Dorsolateral prefrontal cortex (tissue), 120 donors: ENCODE measurements at regions of chr17 and their contacts with region 1.

Region 1: GRCh38 chr17:5111402-5112204 is at the start of gene ZNF232:
- DNase-seq: peak; percentile 79 to 95 (median 90)
- H3K4me3 ChIP-seq: peak within 1 kb of the TSS; percentile 52 to 99 (median 93)
- H3K27ac ChIP-seq: peak within 1 kb of the TSS in 57 of 59 donors; percentile 2 to 92 (median 80)
- H3K27me3 ChIP-seq: peaks cover 0 to 26% (median 13%) of the 10 kb centered on the region in 45 donors
- CTCF ChIP-seq: peak in 48 of 56 donors; percentile 17 to 68 (median 44)
- total RNA-seq, gene ZNF232: 7.6 to 20.3 (median 10.9) TPM

Region 2: DNA sequence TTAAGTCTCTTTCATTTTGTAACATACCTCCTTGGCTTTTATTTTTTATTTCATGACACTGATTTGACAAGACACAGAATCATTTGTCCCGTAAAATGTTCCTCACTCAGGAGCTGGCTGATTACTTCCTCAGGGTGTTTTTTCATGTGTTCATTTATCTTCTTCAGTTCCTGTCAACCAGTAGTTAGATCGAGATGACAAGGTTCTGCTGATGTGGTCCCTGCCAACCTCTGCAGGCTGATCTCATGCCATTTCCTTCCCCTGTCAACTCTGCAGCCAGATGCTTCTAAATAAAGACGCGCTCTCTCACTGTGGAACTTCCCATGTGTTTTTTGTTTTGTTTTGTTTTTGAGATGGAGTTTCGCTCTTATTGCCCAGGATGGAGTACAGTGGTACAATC is 363.8 kb before region 1 on chr17:
- intact Hi-C with region 1: no loop called
- DNase-seq: no peak
- H3K4me3 ChIP-seq: no peak overlapping the region
- H3K27ac ChIP-seq: peak overlapping the region in 26 of 59 donors; percentile 5 to 67 (median 42)
- H3K27me3 ChIP-seq: peaks cover 0 to 31% (median 14%) of the 10 kb centered on the region in 45 donors
- CTCF ChIP-seq: no peak

Region 3: DNA sequence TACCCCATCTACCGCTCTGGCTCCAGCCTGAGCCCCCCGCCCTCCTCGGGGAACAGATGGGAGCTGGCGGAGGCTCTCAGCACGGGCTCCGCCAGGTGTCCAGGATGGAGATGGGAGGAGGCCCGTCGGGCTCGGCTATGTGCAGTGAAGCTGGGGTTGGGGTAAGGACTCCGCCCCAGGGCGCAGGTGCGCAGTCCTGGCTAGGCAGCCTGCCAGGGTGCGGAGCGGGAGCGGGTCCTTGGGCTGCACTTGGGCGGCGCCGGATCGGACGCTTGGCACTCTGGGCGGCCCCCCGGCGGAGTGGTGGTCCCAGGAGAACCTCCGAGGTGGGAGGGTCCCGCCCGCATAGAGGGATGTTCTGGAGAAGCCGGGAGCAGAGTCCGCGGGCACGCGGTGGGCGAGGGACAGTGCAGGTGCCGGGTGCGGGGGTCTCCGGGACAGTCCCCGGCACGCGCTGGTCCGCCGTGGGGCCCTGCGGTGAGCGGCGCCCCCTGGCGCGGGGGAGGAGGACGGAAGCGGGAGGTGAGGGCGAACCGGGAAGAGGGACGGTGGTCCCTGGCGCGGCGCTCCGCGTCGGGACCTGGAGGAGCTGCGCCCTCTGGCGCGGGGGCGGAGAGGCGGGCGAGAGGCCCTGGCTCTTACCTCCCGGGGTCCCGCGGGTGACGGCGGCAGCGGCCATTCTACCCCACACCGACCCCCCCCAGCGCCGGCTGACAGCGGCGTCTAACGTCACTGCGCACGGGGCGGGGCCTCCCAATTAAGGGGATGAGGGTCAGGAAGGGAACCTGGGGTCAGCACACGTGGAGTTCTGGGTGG is 124.4 kb before region 1 on chr17 and contains the start of gene CAMTA2:
- intact Hi-C with region 1: loop called in 1 of 2 experiments (anchors 5 kb)
- DNase-seq: peak; percentile 77 to 93 (median 90)
- H3K4me3 ChIP-seq: peak within 1 kb of the TSS; percentile 64 to 100 (median 96)
- H3K27ac ChIP-seq: peak within 1 kb of the TSS; percentile 68 to 98 (median 93)
- H3K27me3 ChIP-seq: no peaks in the 10 kb centered on the region
- CTCF ChIP-seq: peak in 55 of 56 donors; percentile 41 to 82 (median 68)
- total RNA-seq, gene CAMTA2: 79.4 to 186 (median 143) TPM

Region 4: DNA sequence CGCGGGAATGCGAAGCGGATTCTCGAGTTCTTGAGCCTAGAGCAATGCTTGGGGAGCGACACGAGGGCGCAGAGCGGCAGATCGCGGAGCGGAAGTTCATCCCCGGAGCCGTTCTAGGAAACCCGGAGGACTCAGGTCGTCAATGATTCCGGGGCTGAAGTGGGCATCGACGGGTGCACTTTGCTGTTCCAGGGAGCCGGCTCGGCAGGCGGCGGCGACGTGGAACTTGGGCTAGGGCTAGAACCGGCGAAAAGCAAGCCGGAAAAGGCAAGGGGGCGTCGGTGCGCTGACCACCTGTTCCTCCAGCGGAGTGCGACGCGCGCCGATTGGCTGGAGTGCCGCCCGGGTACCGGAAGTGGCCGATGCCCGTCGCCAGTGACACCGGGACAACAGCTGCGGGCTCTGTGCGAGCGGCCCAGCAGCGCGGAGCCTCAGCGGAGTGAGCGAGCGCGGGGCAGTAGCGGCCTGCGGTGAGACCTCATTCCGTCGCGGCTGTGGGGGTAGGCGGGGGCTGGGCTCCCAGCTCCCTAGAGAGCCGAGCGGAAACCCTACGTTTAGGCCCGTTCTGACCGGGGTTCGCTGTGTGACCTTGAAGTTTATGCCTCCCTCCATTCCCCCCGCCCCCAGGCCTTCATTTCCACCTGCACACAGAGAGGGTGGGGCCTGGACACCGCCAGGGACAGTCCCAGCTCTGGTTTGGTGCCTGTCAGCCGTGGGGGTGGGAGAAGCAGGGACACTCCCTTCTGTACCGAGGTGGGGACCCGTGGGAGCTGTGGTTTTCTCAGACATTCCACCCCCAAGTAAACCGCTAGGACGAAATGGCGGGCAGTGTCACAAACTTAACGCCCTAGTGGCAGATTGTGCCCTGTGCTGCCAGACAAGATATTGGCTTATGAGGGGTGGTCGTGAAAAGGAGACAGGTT is 33.2 kb before region 1 on chr17 and contains the start of gene ZFP3:
- intact Hi-C with region 1: loop called in 1 of 2 experiments (anchors 2 kb)
- DNase-seq: peak; percentile 76 to 91 (median 86)
- H3K4me3 ChIP-seq: peak within 1 kb of the TSS; percentile 49 to 98 (median 86)
- H3K27ac ChIP-seq: peak within 1 kb of the TSS in 57 of 59 donors; percentile 1 to 93 (median 78)
- H3K27me3 ChIP-seq: peaks cover 0 to 3% (median 0%) of the 10 kb centered on the region in 45 donors
- CTCF ChIP-seq: peak in 39 of 56 donors; percentile 5 to 64 (median 36)
- total RNA-seq, gene ZFP3: 4.7 to 13.7 (median 9.1) TPM

Region 5: DNA sequence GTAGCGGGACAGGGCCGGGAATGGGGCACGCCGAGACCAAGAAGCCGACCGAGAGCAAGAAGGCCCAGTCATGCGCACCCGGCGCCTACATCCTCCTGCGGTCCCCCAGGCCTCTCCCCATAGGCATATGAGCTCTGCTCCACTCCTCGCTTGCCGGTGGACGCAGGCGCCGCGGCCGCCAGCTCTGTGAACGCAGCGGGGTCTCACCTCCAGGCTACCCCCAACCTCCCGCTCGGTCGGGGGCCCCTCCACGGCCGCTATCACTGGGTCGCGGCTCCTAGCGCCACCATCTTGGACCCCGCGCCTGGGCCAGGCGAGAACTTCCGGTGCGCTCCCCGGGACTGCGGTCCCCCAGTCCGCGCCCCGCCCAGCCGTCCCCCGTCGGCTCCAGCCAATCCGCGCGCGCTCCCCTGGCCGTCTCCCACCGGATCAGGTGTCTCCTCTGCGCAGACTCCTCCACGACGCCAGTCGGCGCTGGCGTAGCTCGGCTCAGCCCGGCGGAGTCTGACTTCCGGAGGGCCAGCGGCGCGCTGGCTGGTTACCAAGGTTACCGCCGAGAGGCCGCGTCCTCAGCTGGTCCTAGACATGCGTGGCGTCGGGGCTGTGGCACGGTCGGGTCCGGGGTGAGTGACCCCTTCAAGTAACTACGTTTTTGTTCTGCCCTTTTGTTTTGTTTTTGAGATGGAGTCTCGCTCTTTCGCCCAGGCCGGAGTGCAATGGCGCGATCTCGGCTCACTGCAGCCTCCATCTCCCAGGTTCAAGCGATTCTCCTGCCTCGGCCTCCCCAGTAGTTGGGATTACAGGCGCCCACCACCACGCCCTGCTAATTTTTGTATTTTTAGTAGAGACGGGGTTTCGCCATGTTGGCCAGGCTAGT is 80.2 kb after region 1 on chr17 and contains the start of gene ZNF594:
- intact Hi-C with region 1: loop called (anchors 5 kb)
- DNase-seq: peak; percentile 88 to 97 (median 96)
- H3K4me3 ChIP-seq: peak within 1 kb of the TSS; percentile 62 to 99 (median 91)
- H3K27ac ChIP-seq: peak within 1 kb of the TSS; percentile 14 to 95 (median 87)
- H3K27me3 ChIP-seq: no peaks in the 10 kb centered on the region
- CTCF ChIP-seq: peak; percentile 41 to 92 (median 76)
- total RNA-seq, gene ZNF594: 14.7 to 32.7 (median 20.5) TPM